ENCODE measurements at regions of chr10 and their contacts with region 1.

Region 1: DNA sequence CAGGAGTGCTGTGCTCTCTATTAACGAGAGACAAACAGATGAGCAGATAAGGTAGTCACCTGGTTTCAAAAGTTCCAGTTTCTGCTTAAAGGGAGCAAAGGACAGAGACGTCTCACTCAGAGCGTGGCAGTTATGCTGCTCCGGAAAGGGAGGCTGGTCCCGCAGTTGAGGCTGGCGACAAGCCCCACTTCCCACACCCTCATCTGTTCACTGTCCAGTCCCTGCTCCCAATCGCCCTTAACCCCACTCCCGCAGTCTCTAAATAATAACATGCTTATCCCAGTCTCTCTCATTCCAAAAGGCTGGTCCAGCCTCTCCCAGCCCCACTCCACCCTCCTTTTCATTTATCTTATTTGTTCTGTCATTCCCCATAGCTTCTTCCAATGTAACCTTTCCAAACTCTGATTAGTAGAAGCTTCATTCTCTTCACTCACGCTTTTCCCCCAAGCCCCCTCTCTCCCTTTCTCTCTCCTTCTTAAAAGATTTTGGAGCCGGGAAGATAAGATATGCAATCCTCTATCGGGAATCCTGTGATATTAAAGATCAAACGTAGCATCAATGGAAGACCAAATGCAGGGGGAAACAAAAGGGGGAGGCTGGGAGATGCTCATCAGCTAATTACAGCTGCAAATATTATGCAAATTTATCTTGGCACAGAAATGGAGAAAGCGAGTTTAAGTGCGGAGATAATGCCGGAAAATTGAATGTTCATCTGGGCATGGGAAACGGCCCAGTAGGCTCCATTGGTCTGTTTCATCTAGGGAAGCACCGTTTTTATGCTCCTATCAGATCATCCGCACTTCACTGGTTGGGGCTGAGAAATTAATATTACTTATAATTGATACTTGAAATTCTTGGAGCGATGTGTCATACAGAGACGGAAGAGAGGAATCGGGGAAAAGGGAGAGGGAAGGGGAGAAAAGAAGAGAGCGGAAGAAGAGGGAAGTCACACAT is 16.3 kb upstream of the GATA3 start:
- DNase-seq: peak; percentile 32
- ATAC-seq: no peak
- H3K4me3 ChIP-seq: no peak overlapping the region
- H3K4me3 Mint-ChIP-seq: no peak overlapping the region
- H3K27ac ChIP-seq: no peak overlapping the region
- H3K27ac Mint-ChIP-seq: peak overlapping the region; percentile 47
- H3K4me1 ChIP-seq: peaks cover 38 to 57% of the 10 kb centered on the region in 2 donors
- H3K4me1 Mint-ChIP-seq: peaks cover 21% of the 10 kb centered on the region
- H3K27me3 ChIP-seq: peaks cover 0 to 95% (median 80%) of the 10 kb centered on the region in 4 experiments
- H3K27me3 Mint-ChIP-seq: peaks cover 75% of the 10 kb centered on the region
- CTCF ChIP-seq: no peak

Region 2: DNA sequence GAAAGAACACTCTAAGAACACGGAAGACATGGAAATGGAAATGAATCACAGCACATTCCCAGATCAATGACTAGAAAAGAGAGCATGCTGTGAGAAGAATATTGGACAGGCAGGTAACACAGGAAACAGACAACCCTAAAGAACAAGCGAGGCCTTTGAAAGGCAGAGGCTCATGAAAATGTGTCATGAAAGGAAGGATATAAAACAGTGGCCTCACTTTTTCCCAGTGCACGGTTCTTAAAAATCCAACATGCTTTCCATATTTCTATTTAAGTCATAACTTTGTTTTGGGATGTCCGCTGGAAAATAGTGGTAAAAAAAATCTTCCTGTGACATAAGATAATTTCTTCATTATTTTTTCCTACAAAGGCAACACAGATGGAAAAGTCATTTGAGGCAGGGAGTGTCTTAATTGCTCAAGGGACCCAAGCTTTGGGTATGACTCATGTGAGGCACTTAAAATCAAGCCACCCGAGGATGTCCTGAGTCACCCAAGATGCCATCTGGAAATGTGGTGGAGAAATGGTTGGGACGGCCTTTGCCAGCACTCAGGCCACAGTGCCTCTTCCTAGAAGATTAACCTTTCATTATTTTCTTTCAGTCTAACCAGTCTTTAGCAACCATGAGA is 388.4 kb before region 1 on chr10:
- CTCF ChIA-PET with region 1: no interaction called
- POLR2A ChIA-PET with region 1: no interaction called
- intact Hi-C with region 1: no loop called
- DNase-seq: no peak
- ATAC-seq: no peak
- H3K4me3 ChIP-seq: no peak overlapping the region
- H3K4me3 Mint-ChIP-seq: no peak overlapping the region
- H3K27ac ChIP-seq: no peak overlapping the region
- H3K27ac Mint-ChIP-seq: no peak overlapping the region
- H3K4me1 ChIP-seq: no peaks in the 10 kb centered on the region
- H3K4me1 Mint-ChIP-seq: no peaks in the 10 kb centered on the region
- H3K27me3 ChIP-seq: peaks cover 0 to 4% (median 4%) of the 10 kb centered on the region in 4 experiments
- H3K27me3 Mint-ChIP-seq: peaks cover 32% of the 10 kb centered on the region
- CTCF ChIP-seq: no peak

Region 3: DNA sequence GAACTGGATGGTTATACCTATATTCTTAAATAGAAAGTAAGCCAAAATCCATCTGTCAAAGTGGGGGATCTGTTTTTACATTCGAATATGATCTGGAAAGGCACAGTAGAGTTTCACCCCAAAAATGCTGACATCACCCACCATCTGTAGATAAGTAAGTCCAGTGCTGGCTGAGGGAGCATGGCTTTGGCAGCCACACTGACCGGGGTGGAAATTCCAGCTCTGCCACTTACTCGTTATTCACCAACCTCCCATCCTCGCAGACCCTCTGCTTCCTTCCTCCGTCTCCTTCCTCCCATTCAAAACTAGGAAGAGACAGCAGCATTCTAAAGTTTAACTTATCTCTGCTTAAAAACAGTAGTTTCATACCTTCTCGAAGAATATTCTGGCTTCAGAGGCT is 68.6 kb before region 1 on chr10:
- CTCF ChIA-PET with region 1: no interaction called
- POLR2A ChIA-PET with region 1: no interaction called
- intact Hi-C with region 1: no loop called
- DNase-seq: no peak
- ATAC-seq: no peak
- H3K4me3 ChIP-seq: no peak overlapping the region
- H3K4me3 Mint-ChIP-seq: no peak overlapping the region
- H3K27ac ChIP-seq: no peak overlapping the region
- H3K27ac Mint-ChIP-seq: no peak overlapping the region
- H3K4me1 ChIP-seq: no peaks in the 10 kb centered on the region
- H3K4me1 Mint-ChIP-seq: peaks cover 4% of the 10 kb centered on the region
- H3K27me3 ChIP-seq: no peaks in the 10 kb centered on the region
- H3K27me3 Mint-ChIP-seq: no peaks in the 10 kb centered on the region
- CTCF ChIP-seq: no peak

Region 4: DNA sequence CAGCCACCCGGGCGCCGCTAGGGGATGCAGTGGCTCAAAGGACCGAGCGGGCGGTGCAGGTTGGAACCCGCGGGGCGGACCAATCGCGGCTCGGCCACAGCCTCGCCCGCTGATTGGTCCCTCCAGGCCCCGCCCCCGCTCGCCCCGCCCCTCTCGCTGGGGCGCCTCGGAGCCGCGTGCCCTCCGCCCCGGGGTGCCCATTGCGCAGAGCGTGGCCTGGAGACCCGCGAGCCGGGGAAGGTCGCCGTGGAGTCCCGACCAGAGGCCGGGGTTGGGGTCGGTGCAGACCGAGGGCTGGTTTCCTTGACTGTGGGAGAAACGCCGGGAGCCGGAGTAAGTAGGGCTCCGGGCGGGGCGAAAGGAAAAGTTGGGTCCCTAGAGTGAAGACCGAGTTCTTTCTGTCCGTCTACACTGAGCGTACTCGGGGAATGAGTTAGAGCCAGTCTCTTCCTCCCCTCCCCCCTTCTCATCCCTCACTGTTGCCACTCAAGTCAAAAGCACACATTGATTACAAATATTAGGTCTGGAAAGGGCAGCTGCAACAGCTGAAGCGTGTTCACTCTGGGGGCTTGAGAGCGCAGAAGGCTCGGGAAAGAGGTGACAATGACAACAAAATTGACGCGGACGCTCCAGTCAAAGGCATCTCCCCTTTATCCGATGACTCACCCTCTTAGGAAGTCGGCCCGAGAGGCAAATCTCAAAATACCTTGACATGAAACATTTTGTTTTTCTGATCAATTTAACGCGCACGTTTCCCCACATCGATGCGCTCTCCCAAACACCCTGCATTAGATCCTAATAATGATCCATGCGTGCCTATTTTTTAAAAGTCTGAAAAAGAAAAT is 15.4 kb after region 1 on chr10:
- CTCF ChIA-PET with region 1: no interaction called
- POLR2A ChIA-PET with region 1: interaction called, 6 read pairs
- intact Hi-C with region 1: loop called (anchors 1 kb)
- DNase-seq: peak; percentile 59
- ATAC-seq: peak; percentile 76
- H3K4me3 ChIP-seq: peak overlapping the region in 3 of 5 experiments; percentile 25 to 52 (median 40)
- H3K4me3 Mint-ChIP-seq: peak overlapping the region; percentile 84
- H3K27ac ChIP-seq: no peak overlapping the region
- H3K27ac Mint-ChIP-seq: peak overlapping the region; percentile 66
- H3K4me1 ChIP-seq: peaks cover 77 to 83% of the 10 kb centered on the region in 2 donors
- H3K4me1 Mint-ChIP-seq: peaks cover 42% of the 10 kb centered on the region
- H3K27me3 ChIP-seq: peaks cover 0 to 93% (median 47%) of the 10 kb centered on the region in 4 experiments
- H3K27me3 Mint-ChIP-seq: peaks cover 38% of the 10 kb centered on the region
- CTCF ChIP-seq: no peak